ENCODE measurements at regions of chr17 and their contacts with region 1.

Region 1: GRCh38 chr17:50865984-50866774 is at the start of gene TOB1:
- DNase-seq: peak; percentile 98
- H3K4me3 Mint-ChIP-seq: peak within 1 kb of the TSS; percentile 97
- H3K27ac Mint-ChIP-seq: peak within 1 kb of the TSS; percentile 96
- H3K4me1 Mint-ChIP-seq: peaks cover 45% of the 10 kb centered on the region
- H3K27me3 Mint-ChIP-seq: no peaks in the 10 kb centered on the region
- total RNA-seq, gene TOB1: 29.0 and 30.1 TPM in 2 replicates

Region 2: DNA sequence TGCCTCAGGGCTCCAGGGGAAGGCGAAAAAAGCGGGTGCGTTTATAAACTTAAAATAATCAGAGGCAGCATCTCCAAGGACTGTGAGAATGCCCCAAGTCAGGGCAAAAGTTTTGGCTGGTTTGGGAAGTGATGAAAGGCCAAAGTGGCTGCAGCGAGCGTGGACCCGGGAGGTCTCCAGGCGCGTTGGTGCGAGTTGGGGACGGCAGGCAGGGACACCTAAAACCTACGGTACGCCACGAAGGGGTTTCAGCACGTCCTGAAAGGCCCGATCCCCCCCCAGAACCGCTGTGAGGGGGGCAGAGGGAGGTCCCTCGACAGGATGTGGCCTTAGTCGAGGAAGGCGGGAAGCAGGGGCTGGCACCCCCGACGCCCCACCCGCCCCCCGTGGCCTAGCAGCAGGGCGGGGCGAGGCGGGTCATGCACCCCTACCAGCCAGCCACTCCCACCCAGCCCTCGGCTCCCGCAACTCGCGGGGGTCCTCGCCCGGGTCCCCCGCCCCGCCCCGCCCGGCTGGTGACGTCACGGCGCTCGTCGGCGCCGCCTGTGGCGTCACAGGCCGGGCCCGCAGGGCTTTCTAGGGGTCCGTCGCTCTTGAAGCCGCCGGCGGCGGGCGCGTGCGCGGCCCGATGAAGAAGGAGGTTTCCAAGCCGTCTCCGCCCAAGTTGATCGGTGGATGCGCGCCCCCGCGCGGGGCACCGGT is 358.2 kb before region 1 on chr17 and contains the start of gene MYCBPAP:
- intact Hi-C with region 1: no loop called
- DNase-seq: peak; percentile 95
- H3K4me3 Mint-ChIP-seq: peak within 1 kb of the TSS; percentile 94
- H3K27ac Mint-ChIP-seq: peak within 1 kb of the TSS; percentile 91
- H3K4me1 Mint-ChIP-seq: peaks cover 55% of the 10 kb centered on the region
- H3K27me3 Mint-ChIP-seq: no peaks in the 10 kb centered on the region
- total RNA-seq, gene MYCBPAP: 3.5 TPM in 2 replicates

Region 3: DNA sequence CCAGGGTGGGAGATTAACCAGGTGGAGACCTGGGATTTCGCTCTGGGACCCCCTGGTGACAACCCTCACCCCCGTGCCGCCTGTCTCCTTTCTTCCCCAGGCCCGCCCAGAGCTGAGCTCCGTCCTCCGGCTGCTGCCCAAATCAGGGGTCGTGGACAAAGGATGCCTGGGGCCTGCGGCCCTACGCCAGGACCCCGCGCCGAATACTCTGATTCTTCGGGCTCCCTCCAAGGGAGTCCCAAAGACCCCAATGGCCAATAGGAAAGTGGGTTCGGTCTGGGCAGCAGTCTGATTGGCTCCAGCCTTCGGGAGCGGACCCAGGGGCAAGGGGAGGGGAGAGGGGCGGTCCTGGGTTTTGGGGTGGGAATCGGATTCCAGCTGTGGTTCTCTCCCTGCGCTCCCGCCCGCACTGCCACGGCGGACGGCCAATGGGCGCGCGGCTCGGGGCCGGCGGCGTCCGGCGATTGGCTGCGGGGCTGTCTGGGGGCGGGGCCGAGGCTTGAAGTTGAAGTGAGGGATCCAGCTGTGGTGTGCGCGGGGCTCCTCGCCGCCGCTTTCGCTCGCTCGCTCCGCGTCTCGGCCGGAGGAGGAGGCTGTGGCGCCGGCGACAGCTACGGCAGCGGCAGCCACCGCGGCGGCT is 305.9 kb before region 1 on chr17 and contains the start of gene CACNA1G:
- intact Hi-C with region 1: loop called (anchors 5 kb)
- DNase-seq: peak; percentile 97
- H3K4me3 Mint-ChIP-seq: peak within 1 kb of the TSS; percentile 80
- H3K27ac Mint-ChIP-seq: no peak within 1 kb of the TSS
- H3K4me1 Mint-ChIP-seq: peaks cover 14% of the 10 kb centered on the region
- H3K27me3 Mint-ChIP-seq: peaks cover 63% of the 10 kb centered on the region
- total RNA-seq, gene CACNA1G: 0.07 TPM in 1 of 2 replicates, not detected in the other

Region 4: DNA sequence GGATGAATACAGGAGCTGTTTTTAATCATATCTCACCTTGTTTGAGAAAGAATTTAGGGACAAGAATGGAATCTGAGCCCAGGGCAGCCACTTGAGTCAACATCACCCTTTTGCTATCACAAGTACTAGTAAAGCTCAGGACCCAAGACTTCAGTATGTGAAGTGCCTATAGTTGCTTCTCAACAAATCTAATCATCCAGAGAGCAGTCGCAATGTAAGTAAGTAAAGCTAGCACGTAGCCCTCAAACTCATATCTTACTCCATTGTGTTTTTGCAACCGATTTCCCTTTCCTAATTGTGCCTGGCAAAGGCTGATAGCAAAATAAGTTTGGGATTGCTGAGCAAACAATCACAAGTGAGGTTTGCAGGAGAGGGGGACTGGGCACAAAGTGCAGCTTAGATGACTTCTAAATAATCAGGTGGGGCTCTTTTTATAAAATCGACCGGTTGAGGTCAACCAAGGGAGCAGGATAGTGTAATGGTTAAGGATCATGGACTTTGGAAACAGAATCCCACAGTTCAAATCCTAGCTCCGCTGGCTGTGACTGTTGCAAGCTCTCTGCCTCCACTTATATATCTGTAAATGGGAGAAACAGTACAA is 13.1 kb before region 1 on chr17:
- intact Hi-C with region 1: loop called (anchors 1 kb)
- DNase-seq: no peak
- H3K4me3 Mint-ChIP-seq: peak overlapping the region; percentile 53
- H3K27ac Mint-ChIP-seq: peak overlapping the region; percentile 82
- H3K4me1 Mint-ChIP-seq: peaks cover 18% of the 10 kb centered on the region
- H3K27me3 Mint-ChIP-seq: peaks cover 21% of the 10 kb centered on the region

Region 5: GRCh38 chr17:50919321-50920085 is 53.3 kb after region 1 on chr17:
- intact Hi-C with region 1: loop called (anchors 1 kb)
- DNase-seq: peak; percentile 95
- H3K4me3 Mint-ChIP-seq: peak overlapping the region; percentile 77
- H3K27ac Mint-ChIP-seq: peak overlapping the region; percentile 93
- H3K4me1 Mint-ChIP-seq: peaks cover 34% of the 10 kb centered on the region
- H3K27me3 Mint-ChIP-seq: peaks cover under 1% of the 10 kb centered on the region

Region 6: GRCh38 chr17:51120739-51121617 is 254.8 kb after region 1 on chr17 and contains the start of gene SPAG9:
- intact Hi-C with region 1: loop called (anchors 2 kb)
- DNase-seq: peak; percentile 98
- H3K4me3 Mint-ChIP-seq: peak within 1 kb of the TSS; percentile 91
- H3K27ac Mint-ChIP-seq: peak within 1 kb of the TSS; percentile 98
- H3K4me1 Mint-ChIP-seq: peaks cover 43% of the 10 kb centered on the region
- H3K27me3 Mint-ChIP-seq: peaks cover 1% of the 10 kb centered on the region
- total RNA-seq, gene SPAG9: 47.5 and 47.7 TPM in 2 replicates

Region 7: DNA sequence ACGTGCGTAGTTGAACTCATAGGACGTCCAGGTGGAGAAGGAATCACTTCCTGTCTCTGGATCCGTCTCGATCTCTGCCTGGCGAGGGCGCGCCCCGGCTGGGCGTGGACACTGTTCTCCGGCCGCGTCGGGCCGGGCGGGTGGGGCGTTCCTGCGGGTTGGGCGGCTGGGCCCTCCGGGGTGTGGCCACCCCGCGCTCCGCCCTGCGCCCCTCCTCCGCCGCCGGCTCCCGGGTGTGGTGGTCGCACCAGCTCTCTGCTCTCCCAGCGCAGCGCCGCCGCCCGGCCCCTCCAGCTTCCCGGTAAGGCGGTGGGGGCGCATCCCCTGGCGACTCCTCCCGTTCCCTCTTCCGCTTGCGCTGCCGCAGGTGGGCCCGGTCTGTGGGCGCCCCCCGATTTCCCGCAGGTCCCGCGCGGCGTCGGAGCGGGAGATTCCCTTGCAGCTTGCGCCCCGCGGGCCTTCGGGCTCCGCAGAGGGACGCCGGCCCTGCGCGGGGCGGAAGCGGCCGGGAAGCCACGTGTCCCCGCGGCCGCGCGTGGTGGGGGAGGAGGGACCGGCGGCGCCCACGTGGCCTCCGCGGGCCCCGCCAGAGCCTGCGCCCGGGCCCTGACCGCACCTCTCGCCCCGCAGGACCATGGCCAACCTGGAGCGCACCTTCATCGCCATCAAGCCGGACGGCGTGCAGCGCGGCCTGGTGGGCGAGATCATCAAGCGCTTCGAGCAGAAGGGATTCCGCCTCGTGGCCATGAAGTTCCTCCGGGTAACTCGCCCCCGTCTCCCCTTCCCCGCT is 300.2 kb after region 1 on chr17 and contains the start of gene NME2:
- intact Hi-C with region 1: loop called (anchors 1 kb)
- DNase-seq: peak; percentile 94
- H3K4me3 Mint-ChIP-seq: peak within 1 kb of the TSS; percentile 88
- H3K27ac Mint-ChIP-seq: peak within 1 kb of the TSS; percentile 97
- H3K4me1 Mint-ChIP-seq: peaks cover 30% of the 10 kb centered on the region
- H3K27me3 Mint-ChIP-seq: no peaks in the 10 kb centered on the region
- total RNA-seq, gene NME2: 752 and 795 TPM in 2 replicates